WTC11 (cell line): ENCODE measurements at regions of chr2 and their contacts with region 1.

Region 1: GRCh38 chr2:18690342-18690741 is 101.0 kb upstream of the NT5C1B start:
- DNase-seq: peak; percentile 76
- ATAC-seq: peak; percentile 99
- H3K4me3 Mint-ChIP-seq: no peak overlapping the region
- H3K27ac Mint-ChIP-seq: no peak overlapping the region
- H3K4me1 Mint-ChIP-seq: no peaks in the 10 kb centered on the region
- H3K27me3 Mint-ChIP-seq: peaks cover 5% of the 10 kb centered on the region
- CTCF ChIP-seq: peak; percentile 70

Region 2: DNA sequence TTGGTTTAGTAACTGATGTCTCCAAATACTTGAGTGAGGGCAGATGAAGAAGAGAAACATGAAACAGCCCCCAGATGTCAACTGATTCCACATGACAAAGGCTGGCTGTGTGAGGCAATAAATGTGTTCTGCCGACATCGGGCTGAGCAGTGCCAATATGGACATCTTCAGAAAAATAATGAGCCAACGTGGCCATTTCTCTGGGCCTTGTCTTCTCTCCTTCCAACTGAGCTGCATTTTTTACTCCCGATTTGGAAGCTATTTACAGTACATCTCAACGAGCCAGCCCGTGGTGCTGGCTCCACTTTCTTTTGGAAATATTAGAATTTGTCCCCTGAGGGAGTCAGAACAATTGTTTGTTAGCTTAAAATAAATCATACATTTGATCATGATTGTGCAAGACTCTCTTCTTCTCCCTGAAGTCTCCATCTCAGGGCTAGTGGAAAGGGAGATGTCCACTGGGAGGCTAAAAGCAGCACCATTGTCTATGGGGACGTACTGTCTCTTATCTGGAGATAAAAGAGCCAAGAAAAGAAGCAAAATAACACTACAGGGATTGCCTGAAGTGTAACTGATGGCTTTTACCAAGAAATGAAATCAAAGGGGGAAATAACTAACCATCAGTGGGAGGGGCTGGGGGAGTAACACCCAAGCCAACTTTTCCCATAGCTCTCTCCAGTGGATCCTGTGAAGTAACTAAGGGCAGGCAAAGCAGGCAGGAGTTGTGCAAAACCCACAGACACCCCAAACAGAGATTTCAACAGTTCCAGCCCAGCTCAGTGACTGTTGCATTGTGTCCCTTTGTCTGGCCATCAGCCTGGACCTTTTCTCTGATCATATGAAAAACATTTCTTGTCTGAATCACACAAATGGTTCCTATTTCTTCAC is 244.7 kb before region 1 on chr2:
- CTCF ChIA-PET with region 1: no interaction called
- POLR2A ChIA-PET with region 1: no interaction called
- DNase-seq: no peak
- ATAC-seq: no peak
- H3K4me3 Mint-ChIP-seq: no peak overlapping the region
- H3K27ac Mint-ChIP-seq: no peak overlapping the region
- H3K4me1 Mint-ChIP-seq: no peaks in the 10 kb centered on the region
- H3K27me3 Mint-ChIP-seq: no peaks in the 10 kb centered on the region
- CTCF ChIP-seq: no peak

Region 3: GRCh38 chr2:18585526-18585925 is 104.8 kb before region 1 on chr2:
- CTCF ChIA-PET with region 1: no interaction called
- POLR2A ChIA-PET with region 1: no interaction called
- DNase-seq: no peak
- ATAC-seq: no peak
- H3K4me3 Mint-ChIP-seq: no peak overlapping the region
- H3K27ac Mint-ChIP-seq: no peak overlapping the region
- H3K4me1 Mint-ChIP-seq: no peaks in the 10 kb centered on the region
- H3K27me3 Mint-ChIP-seq: no peaks in the 10 kb centered on the region; the same call in 1 of the 2 replicates
- CTCF ChIP-seq: no peak

Region 4: GRCh38 chr2:18626256-18626668 is 64.1 kb before region 1 on chr2:
- CTCF ChIA-PET with region 1: no interaction called
- POLR2A ChIA-PET with region 1: no interaction called
- DNase-seq: no peak
- ATAC-seq: no peak
- H3K4me3 Mint-ChIP-seq: no peak overlapping the region
- H3K27ac Mint-ChIP-seq: no peak overlapping the region
- H3K4me1 Mint-ChIP-seq: no peaks in the 10 kb centered on the region
- H3K27me3 Mint-ChIP-seq: no peaks in the 10 kb centered on the region
- CTCF ChIP-seq: no peak

Region 5: GRCh38 chr2:18701981-18702380 is 11.6 kb after region 1 on chr2:
- CTCF ChIA-PET with region 1: interaction called, 13 read pairs
- POLR2A ChIA-PET with region 1: no interaction called
- DNase-seq: no peak
- ATAC-seq: no peak
- H3K4me3 Mint-ChIP-seq: no peak overlapping the region
- H3K27ac Mint-ChIP-seq: no peak overlapping the region
- H3K4me1 Mint-ChIP-seq: peaks cover 6% of the 10 kb centered on the region; the same call in 1 of the 2 replicates
- H3K27me3 Mint-ChIP-seq: peaks cover 5% of the 10 kb centered on the region
- CTCF ChIP-seq: no peak

Region 6: DNA sequence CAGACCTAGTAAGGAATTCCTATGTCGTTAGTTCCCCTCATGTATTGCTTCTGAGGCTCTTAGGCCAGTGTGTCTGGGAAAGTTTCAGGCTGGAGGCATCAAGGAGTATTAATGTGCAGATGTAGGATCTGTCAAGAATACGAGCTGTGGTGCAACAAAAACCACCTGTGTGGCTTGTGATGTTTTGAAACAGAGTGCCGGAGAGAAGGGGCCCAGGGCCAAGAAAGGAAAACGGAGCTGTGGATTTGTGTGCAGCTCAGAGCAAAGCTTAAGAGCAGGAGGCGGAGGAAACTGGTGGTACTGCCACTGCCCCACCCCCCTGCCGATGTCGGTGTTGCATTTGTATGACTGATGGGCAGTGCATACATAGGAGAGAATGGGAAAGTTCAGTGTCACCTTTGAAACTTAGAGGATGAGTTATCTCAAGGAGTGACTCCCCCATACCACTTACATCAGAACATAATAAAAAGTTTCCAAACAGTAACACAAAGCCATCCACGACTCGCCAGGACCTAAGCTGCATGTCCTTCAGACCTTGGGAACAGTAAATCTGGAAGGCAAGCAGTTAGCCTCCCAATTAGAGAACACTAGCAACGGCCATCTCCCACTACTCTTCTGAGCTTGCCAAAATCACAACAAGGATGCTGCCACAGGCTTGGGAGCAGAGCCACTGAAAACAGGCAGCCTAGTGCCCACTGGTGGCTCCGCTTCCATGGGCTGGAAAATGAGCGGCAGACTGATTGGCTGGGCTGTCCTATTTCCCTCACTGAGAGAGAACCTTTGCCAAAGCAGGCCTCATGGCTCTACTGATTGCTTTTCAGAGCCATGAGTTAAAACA is 51.8 kb after region 1 on chr2:
- CTCF ChIA-PET with region 1: interaction called, 15 read pairs
- POLR2A ChIA-PET with region 1: no interaction called
- DNase-seq: no peak
- ATAC-seq: peak; percentile 69
- H3K4me3 Mint-ChIP-seq: no peak overlapping the region
- H3K27ac Mint-ChIP-seq: no peak overlapping the region
- H3K4me1 Mint-ChIP-seq: peaks cover 4% of the 10 kb centered on the region
- H3K27me3 Mint-ChIP-seq: no peaks in the 10 kb centered on the region
- CTCF ChIP-seq: no peak